ENCODE measurements at regions of chr1 and their contacts with region 1.

Region 1: DNA sequence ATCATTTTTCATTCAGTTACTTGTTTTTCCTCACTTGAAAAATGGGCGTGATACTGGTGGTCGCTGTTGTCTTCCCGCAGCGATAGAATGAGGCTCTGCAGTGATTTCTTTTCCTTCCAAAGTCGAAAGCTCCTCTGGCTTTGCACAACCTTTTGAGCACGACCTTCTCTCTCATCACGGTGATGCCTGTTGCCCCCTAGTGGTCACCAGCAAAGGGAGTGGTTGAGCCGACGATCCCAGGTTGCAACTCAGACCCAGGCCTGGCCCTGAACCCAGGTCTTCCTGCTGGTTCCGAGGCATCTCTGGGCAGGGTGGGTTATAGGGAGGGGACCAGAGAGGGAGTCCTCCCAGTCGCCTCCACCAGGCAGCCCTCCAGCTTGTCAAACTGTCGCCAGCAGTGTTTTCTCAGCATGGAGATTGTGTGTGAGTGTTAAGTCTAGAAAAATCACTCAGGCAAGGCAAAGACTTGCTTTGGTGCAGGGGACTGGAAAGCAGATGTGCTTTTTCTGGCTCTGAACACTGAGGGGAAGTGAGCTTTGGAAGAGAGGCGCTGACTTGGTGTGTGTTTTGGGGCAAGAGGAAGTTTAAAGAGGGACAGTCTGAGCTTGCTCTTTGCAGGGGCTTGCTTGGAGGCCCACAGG is 285.3 kb downstream of the CAMTA1 start:
- DNase-seq: peak; percentile 34
- H3K4me3 ChIP-seq: no peak overlapping the region
- H3K27ac ChIP-seq: no peak overlapping the region
- H3K4me1 ChIP-seq: no peaks in the 10 kb centered on the region
- H3K27me3 ChIP-seq: peaks cover 4% of the 10 kb centered on the region
- CTCF ChIP-seq: peak; percentile 83 to 91

Region 2: GRCh38 chr1:6701437-6702153 is 368.9 kb before region 1 on chr1 and contains the start of gene DNAJC11:
- CTCF ChIA-PET with region 1: no interaction called
- dilution Hi-C with region 1: no loop called
- in situ Hi-C with region 1: loop called in 1 of 2 experiments (anchors 25 kb)
- intact Hi-C with region 1: no loop called
- DNase-seq: peak; percentile 78
- H3K4me3 ChIP-seq: peak within 1 kb of the TSS; percentile 68 to 98 (median 92)
- H3K27ac ChIP-seq: peak within 1 kb of the TSS; percentile 84
- H3K4me1 ChIP-seq: peaks cover 16% of the 10 kb centered on the region
- H3K27me3 ChIP-seq: no peaks in the 10 kb centered on the region
- CTCF ChIP-seq: peak; percentile 64 to 90
- total RNA-seq, gene DNAJC11: 27.3 to 69.3 TPM

Region 3: GRCh38 chr1:6794164-6794563 is 276.3 kb before region 1 on chr1:
- CTCF ChIA-PET with region 1: no interaction called
- dilution Hi-C with region 1: no loop called
- in situ Hi-C with region 1: no loop called
- intact Hi-C with region 1: loop called (anchors 1 kb)
- DNase-seq: peak; percentile 8
- H3K4me3 ChIP-seq: no peak overlapping the region
- H3K27ac ChIP-seq: no peak overlapping the region
- H3K4me1 ChIP-seq: no peaks in the 10 kb centered on the region
- H3K27me3 ChIP-seq: no peaks in the 10 kb centered on the region
- CTCF ChIP-seq: peak; percentile 23 to 25

Region 4: GRCh38 chr1:7110321-7110720 is 39.8 kb after region 1 on chr1:
- CTCF ChIA-PET with region 1: no interaction called
- dilution Hi-C with region 1: no loop called
- in situ Hi-C with region 1: no loop called
- intact Hi-C with region 1: loop called (anchors 1 kb)
- DNase-seq: peak; percentile 64
- H3K4me3 ChIP-seq: no peak overlapping the region
- H3K27ac ChIP-seq: peak overlapping the region; percentile 64
- H3K4me1 ChIP-seq: peaks cover 24% of the 10 kb centered on the region
- H3K27me3 ChIP-seq: no peaks in the 10 kb centered on the region
- CTCF ChIP-seq: no peak